ENCODE measurements at regions of chr7 and their contacts with region 1.

Region 1: GRCh38 chr7:51067757-51068156 is 248.9 kb downstream of the COBL start:
- DNase-seq: peak; percentile 16
- H3K4me3 ChIP-seq: no peak overlapping the region
- CTCF ChIP-seq: peak; percentile 55

Region 2: DNA sequence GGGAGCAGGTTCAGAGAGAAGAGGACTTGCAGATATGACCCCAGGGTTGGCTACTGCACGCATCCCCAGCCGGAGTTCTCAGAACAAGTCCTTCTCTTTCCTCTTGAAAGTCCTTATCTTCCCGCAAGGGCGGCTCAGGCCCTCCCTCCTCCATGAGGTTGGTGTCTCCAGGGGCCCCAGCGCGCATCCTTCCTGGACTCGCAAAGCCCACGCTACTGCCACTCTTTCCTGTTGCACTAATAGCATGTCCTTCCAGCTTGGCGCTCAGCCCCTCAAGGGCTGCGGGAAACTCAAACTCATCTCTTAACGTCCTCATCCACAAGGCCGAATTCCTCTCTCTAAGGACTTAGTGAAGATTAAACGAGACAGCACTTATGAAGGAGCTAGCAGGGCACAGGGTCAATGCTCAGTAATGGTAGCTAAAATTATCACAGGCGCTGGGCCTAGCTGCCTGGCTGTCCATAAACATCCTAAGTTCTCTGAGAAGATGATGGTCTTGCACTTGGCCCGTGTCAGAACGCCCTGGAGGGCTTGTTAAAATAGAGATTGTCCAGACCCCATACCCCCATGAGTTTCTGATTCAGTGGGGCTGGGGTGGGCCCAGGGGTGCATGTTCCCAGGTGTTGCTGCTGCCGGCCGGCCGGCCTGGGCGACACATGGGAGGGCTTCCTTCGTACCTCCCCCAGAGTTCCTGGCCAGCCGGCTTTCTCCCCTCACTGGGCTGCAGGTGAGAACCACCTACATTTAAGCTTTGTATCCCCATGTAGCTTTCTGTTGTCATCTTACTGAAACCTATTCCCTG is 12.5 kb before region 1 on chr7:
- CTCF ChIA-PET with region 1: interaction called, 30 read pairs
- POLR2A ChIA-PET with region 1: no interaction called
- DNase-seq: no peak
- H3K4me3 ChIP-seq: no peak overlapping the region
- CTCF ChIP-seq: no peak

Region 3: DNA sequence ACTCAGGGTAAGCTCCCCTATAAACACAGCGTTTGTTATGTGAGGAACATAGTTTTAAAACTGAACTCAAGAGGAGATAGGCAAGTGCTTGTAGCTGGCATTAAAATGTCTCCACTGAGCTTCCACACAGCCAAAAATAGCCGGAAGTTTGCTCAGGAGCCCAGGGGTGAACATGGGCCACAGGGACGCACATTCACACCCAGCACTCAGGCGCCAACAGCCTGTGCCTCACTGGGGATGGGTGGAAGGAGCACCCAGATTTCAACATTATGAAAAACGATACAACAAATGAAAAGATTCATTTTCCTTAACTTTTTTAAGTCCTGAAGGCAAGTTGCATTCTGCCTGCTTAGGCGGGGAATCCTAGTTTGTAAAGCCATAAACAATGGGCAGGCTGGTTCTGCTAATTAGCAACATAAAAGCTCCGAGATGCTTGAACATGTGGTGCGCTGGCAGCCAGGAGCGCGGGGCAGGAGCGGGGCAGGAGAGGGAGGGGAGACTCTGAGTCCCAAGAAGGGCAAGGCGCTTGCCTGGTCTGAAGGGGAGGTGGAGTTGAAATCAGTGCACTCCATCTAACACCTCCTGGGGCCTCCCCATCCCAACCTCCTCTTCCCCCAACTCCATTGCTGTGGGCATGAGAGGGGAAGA is 13.0 kb after region 1 on chr7:
- CTCF ChIA-PET with region 1: interaction called, 21 read pairs
- POLR2A ChIA-PET with region 1: no interaction called
- DNase-seq: no peak
- H3K4me3 ChIP-seq: no peak overlapping the region
- CTCF ChIP-seq: no peak

Region 4: DNA sequence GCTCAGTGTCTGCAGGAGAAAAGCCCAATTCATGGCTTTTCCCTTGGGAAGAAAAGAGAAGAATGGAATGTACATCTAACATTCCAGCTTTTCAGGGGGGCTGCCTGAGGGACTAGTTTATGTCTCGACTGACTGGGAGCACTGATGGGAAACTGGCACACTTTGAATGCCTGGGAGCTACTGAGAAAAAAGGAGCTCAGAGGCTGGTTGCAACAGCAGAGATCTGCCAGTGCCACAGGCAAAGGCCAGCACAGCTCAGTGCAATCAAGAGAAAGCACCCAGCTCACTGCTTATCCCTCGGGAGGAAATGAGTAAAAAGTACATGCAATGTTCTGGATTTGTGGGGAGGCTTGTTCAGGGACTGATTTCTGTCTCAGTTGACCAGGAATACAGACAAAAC is 22.7 kb after region 1 on chr7:
- CTCF ChIA-PET with region 1: interaction called, 14 read pairs
- POLR2A ChIA-PET with region 1: no interaction called
- DNase-seq: no peak
- H3K4me3 ChIP-seq: no peak overlapping the region
- CTCF ChIP-seq: no peak

Measured in AG04449 (cell line).